OCI-LY7 (cell line): ENCODE measurements at regions of chr2 and their contacts with region 1.

Region 1: DNA sequence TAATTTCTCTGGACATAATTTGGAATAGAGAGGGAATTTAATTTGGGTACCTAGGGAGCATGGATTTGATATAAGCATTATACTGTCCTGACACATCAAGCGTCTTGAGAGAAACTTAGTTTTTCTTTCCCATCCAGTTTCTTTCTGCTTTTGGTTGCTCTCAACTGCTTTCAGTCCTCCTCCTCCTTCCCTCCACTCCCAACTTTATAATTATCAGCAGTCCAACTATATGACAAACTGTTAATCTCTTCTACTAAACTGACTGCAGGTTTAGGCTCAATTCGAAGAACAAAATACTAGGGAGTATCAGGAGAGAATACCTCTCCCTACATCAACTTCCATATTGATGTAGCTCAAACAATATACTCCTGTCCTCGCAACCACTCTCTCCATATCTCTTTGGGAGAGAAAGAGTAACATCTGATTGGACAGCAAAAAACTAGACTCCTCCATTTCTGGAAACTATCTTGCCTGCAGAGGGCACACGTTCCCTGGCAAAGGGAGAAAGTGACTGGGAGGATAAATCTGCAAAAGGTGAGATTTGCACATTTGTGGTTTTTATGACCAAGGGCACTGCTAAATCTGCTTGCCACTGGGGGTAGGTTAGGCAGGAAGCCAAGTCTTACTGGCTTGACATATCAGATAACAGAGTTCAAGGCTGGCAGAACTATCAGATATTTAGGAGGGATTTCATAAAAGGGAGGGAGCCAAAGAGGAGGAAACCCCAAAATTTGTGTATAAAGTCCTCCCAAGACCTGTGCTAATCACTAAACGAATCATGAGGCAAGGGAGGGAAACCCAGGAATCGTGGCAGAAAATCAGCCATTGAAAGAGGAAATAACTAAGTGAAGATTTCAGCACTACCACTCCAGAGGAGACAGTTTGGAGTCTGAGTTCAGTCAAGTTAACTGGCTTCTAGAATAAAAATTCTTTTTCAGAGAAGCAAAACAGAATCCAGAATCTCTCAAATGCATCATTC is 40.0 kb downstream of the ICA1L start:
- DNase-seq: peak; percentile 69
- H3K4me3 ChIP-seq: no peak overlapping the region
- H3K27ac ChIP-seq: no peak overlapping the region
- H3K4me1 ChIP-seq: peaks cover 8% of the 10 kb centered on the region
- CTCF ChIP-seq: peak; percentile 88

Region 2: GRCh38 chr2:202574541-202574940 is 257.0 kb before region 1 on chr2:
- CTCF ChIA-PET with region 1: no interaction called
- POLR2A ChIA-PET with region 1: no interaction called
- intact Hi-C with region 1: loop called (anchors 5 kb)
- DNase-seq: no peak
- H3K4me3 ChIP-seq: no peak overlapping the region
- H3K27ac ChIP-seq: no peak overlapping the region
- H3K4me1 ChIP-seq: no peaks in the 10 kb centered on the region
- CTCF ChIP-seq: no peak

Region 3: GRCh38 chr2:202588647-202589581 is 242.6 kb before region 1 on chr2:
- CTCF ChIA-PET with region 1: no interaction called
- POLR2A ChIA-PET with region 1: interaction called, 3 read pairs
- intact Hi-C with region 1: loop called (anchors 5 kb)
- DNase-seq: peak; percentile 86
- H3K4me3 ChIP-seq: no peak overlapping the region
- H3K27ac ChIP-seq: no peak overlapping the region
- H3K4me1 ChIP-seq: peaks cover 3% of the 10 kb centered on the region
- CTCF ChIP-seq: peak; percentile 93

Region 4: DNA sequence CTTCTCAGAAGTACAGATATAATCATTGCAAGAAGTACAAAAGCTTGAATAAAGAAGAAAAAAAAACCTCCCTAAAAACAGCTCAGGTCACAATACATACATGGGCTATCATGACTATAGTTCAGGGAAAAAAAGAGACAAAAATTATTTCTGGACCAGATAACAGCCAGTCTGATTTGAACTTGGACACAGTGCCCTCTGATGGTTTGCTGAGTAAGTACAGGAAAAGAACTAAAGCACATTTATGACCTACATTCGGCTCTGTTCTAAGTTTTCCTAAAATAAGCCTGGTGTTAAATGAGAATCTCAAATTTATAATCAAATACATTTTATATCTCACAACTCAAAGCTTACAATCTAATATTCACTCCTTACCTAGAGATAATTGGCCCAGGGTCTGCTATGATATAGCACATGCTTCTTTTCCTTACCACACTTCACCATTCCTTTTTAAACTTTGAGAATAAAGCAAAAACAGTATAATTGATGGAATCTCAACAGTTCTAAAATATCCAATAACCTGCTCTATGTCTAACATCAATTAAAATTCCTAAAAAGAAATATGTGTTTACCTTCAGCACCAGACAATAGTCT is 622.4 kb after region 1 on chr2:
- CTCF ChIA-PET with region 1: no interaction called
- POLR2A ChIA-PET with region 1: interaction called, 3 read pairs
- intact Hi-C with region 1: loop called (anchors 5 kb)
- DNase-seq: peak; percentile 71
- H3K4me3 ChIP-seq: no peak overlapping the region
- H3K27ac ChIP-seq: no peak overlapping the region
- H3K4me1 ChIP-seq: peaks cover 9% of the 10 kb centered on the region
- CTCF ChIP-seq: peak; percentile 96

Region 5: DNA sequence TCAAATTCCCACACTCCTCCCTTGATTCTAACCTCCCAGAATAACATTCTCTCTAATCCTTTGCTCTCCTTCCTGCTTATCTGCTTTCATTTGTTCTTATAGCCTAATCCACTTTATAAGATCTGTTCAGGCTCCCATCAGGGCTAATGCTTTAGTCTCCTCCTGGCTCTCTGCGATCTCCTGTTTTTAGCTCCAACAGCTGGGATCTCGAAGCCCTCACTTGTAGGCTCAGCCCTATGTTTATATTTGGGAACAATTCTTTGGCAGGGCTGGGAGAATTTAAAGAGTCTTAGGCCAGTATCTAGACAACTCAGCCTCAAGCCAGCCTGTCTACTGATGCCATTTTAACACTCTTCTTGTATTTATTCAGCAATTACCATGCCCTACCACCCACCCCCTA is 730.7 kb after region 1 on chr2:
- CTCF ChIA-PET with region 1: no interaction called
- POLR2A ChIA-PET with region 1: no interaction called
- intact Hi-C with region 1: no loop called
- DNase-seq: no peak
- H3K4me3 ChIP-seq: no peak overlapping the region
- H3K27ac ChIP-seq: no peak overlapping the region
- H3K4me1 ChIP-seq: peaks cover 4% of the 10 kb centered on the region
- CTCF ChIP-seq: no peak